Astrocyte of the cerebellum (primary cell): ENCODE measurements at regions of chr14 and their contacts with region 1.

Region 1: DNA sequence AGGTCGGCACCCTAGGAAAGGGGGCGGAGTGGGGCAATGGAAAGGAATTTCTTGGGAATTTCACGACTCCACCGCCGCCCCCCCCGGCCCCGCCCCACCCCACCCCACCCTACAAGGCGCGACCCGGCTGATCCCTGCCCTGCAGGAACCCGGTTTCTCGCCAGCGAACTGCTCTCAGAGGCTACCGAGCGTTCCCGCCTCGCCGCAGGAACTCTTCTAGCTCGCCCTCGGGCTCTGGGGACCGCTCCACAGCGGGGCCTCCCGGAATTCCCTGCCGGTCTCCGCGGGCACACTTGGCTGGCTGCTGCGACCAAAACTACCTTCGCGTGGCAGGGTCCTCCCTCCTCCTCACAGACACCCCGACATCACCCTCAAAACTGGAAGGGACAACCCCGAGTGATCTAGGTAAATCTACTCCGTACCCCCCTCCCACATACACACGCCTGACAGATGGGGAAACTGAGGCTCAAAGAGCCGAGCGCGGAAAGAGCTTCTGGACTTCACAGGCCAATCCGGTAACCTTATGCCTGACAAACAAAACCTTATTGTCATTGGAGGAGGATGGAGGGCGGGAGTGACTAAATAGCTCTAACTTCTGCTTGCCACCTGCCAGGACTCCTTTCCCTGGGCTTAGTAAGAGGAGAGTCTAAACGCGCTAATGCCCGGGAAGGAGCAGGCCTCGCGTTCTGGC is 826 bp upstream of the ACTN1 start:
- DNase-seq: no peak
- H3K4me3 ChIP-seq: peak overlapping the region; percentile 98
- CTCF ChIP-seq: no peak

Region 2: DNA sequence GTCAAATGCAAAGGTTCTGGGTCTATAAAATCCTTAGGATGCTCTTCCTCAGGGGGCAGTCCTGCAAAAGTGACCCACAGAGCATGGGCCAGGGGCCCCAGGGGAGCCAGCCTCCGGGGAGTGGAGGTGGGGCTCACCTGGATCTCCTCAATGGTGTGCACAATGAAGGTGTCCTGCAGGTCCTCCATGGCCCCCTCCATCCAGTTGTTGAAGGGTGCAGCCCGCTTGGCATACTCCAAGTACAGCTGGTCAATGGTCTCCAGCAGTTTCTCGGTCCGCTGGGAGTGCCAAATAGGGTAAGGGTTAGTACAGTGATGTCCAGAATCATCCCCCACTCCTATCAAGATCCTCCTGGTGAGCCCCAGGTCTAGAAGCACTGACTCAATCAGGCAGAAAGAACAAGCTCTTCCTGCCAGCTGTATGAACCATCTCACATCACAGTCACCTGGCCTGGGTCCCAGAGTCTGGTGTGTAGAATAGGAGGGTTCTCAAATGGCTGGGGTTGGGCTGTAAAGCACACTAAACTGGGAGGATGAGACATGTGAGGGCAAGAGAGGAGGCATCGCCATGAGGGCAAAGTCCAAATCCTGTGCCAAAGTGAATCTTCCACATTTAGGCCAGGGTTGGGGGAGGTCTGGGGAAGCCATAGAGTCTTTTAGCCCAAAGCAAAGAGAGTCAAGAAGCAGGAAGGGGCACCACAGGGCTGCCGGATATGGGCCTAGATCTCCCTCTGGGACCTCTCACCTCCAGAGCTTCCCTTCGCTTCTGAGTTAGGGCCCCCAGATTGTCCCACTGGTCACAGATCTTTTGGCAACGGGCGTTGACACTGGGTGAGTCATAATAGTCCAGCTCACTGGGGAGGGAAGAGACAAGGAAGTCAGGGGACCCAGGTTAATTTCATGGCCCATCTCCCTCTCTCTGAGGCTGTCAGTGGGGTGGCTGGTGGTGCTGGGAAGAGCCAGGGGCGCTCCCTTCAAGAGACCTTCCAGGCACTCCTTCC is 95.6 kb before region 1 on chr14:
- in situ Hi-C with region 1: no loop called
- DNase-seq: peak; percentile 93
- H3K4me3 ChIP-seq: no peak overlapping the region
- CTCF ChIP-seq: no peak

Region 3: DNA sequence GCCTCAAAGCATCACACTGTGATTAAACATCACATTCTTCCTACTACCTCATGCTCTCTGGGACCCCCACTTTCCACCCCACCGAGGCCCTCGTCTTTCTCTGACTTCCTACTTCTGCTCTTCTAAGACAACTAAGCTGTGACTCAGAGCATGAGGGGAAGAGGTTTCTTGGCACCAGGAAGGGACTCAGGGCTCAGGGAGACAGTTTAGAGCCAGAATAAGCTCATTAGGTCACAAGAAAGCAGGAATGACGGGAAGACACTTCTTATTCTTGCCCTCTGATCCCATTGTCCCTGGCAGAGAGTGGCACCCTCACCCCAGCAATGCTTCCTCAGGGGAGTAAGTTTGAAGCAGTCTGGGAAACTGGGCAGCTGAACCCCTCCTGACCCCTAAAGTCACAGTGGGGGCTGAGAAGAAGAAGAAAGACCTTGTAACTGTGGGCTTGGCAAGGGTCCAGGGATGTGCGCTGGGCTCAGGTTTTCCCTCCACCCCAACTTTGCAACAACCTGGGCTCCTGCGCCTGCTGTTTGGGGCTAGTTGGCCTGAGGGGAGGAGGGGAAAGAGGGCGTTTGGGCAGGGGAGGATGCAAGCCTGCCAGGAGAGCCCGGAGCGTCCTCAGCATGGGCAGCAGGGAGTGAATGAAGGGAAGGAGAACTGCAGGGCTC is 63.8 kb after region 1 on chr14:
- in situ Hi-C with region 1: loop called (anchors 10 kb)
- DNase-seq: no peak
- H3K4me3 ChIP-seq: no peak overlapping the region
- CTCF ChIP-seq: no peak

Region 4: GRCh38 chr14:69090187-69090789 is 110.4 kb after region 1 on chr14:
- in situ Hi-C with region 1: loop called (anchors 10 kb)
- DNase-seq: no peak
- H3K4me3 ChIP-seq: no peak overlapping the region
- CTCF ChIP-seq: peak; percentile 77